GM10248 (cell line): ENCODE measurements at regions of chr9 and their contacts with region 1.

Region 1: GRCh38 chr9:105299190-105299854 is 54.9 kb downstream of the SLC44A1 start:
- DNase-seq: no peak
- CTCF ChIP-seq: no peak

Region 2: DNA sequence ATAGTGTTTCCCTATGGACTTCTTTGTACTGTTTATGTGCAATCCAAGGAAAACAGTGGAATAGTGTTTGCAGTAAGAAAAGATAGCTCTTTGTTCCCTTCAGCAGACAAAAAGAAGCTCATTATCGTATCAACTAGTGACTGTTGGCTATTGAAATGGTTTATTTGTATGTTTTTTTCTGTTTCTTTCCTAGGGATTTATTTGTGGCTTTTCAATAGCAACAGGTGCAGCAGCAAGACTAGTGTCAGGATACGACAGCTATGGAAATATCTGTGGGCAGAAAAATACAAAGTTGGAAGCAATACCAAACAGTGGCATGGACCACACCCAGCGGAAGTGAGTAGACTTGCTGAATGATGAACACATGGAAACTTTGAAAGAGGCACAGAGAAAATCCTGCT is 10.2 kb after region 1 on chr9:
- CTCF ChIA-PET with region 1: interaction called, 10 read pairs
- POLR2A ChIA-PET with region 1: no interaction called
- DNase-seq: no peak
- CTCF ChIP-seq: no peak

Region 3: DNA sequence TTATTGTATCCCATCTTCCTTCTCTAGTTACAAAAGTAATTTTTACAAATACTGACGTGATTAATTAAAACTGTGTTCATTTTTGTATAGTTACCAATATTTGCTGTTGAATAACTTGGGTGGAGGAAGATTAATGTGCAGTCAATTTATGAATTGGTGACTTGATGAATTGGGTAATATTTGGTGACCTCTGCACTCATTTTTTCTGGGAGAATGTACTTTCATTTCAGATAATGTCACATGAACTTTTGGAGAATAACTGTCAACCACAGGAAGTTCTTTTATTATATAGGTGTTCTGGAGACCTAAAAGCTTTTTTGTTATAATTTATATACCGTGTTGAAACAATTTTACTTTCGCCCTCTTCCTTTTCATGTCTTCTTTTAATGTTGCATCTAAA is 232.2 kb after region 1 on chr9:
- CTCF ChIA-PET with region 1: no interaction called
- POLR2A ChIA-PET with region 1: no interaction called
- DNase-seq: no peak
- CTCF ChIP-seq: no peak